Upper lobe of right lung (tissue), 1 donor: ENCODE measurements at regions of chr12 and their contacts with region 1.

Region 1: GRCh38 chr12:30847259-30847658 is 79.3 kb upstream of the TSPAN11 start:
- DNase-seq: no peak
- ATAC-seq: peak; percentile 35
- H3K4me3 ChIP-seq: no peak overlapping the region
- H3K27ac ChIP-seq: no peak overlapping the region
- H3K4me1 ChIP-seq: no peaks in the 10 kb centered on the region
- H3K27me3 ChIP-seq: no peaks in the 10 kb centered on the region
- CTCF ChIP-seq: peak; percentile 67

Region 2: GRCh38 chr12:30706476-30706875 is 140.8 kb before region 1 on chr12:
- intact Hi-C with region 1: no loop called
- DNase-seq: no peak
- ATAC-seq: no peak
- H3K4me3 ChIP-seq: no peak overlapping the region
- H3K27ac ChIP-seq: no peak overlapping the region
- H3K4me1 ChIP-seq: no peaks in the 10 kb centered on the region
- H3K27me3 ChIP-seq: no peaks in the 10 kb centered on the region
- CTCF ChIP-seq: no peak

Region 3: GRCh38 chr12:30985814-30986452 is 138.7 kb after region 1 on chr12:
- intact Hi-C with region 1: loop called (anchors 5 kb)
- DNase-seq: peak; percentile 74
- ATAC-seq: peak; percentile 67
- H3K4me3 ChIP-seq: no peak overlapping the region
- H3K27ac ChIP-seq: no peak overlapping the region
- H3K4me1 ChIP-seq: no peaks in the 10 kb centered on the region
- H3K27me3 ChIP-seq: no peaks in the 10 kb centered on the region
- CTCF ChIP-seq: peak; percentile 60

Region 4: GRCh38 chr12:31245822-31246469 is 398.7 kb after region 1 on chr12:
- intact Hi-C with region 1: loop called (anchors 10 kb)
- DNase-seq: no peak
- ATAC-seq: peak; percentile 17
- H3K4me3 ChIP-seq: no peak overlapping the region
- H3K27ac ChIP-seq: no peak overlapping the region
- H3K4me1 ChIP-seq: no peaks in the 10 kb centered on the region
- H3K27me3 ChIP-seq: no peaks in the 10 kb centered on the region
- CTCF ChIP-seq: no peak